Left colon (tissue), 2 donors: ENCODE measurements at regions of chr4 and their contacts with region 1.

Region 1: DNA sequence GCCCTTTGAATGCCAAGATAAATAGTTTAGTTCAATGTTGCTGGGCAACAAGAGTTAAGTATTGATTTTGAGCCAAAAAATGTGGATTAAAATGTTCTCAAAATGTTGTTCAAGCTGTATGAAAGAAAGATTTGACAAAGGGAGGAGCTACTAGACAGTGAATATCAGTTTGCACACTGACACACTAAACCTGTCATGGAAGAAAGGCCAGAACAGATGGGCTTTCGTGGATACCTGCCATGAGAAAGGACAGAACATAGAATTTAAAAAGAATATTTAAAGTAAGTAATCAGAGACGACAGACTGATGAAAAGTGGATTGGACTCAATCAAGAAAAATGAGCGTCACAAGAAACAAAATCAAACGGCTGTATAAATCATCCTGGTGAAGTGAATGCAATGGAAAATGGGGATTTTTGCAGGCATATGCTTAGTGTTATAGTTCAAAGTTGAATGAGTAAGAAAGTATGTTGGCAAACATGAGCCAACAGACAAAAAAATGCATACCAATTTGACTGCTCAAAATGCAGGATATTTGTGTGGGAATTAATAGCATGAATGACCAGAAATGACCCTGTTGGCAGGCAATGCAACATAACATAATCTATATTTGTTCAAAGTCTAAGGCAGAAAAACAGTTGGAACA is 7.4 kb downstream of the PCDH18 start:
- DNase-seq: no peak
- ATAC-seq: no peak

Region 2: DNA sequence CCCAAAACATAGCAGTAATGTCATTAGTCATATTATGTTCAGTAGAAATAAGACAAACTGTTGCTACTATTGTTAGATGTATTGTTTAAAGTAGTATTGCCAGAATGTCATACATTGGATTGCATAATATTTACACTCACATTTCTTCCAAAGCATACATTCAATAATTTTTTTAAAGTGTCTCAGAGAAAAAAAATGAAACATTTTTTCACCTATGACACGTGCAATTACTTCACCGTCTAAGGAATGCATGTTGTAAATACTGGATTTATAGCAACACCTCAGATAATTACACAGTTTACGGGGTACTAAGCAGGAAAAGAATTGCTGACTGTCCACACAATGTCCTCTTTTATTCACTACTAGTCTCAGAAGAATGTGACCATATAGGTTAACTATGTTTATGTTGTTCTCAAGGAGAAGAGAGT is 154.6 kb before region 1 on chr4:
- intact Hi-C with region 1: loop called in 1 of 2 experiments (anchors 10 kb)
- DNase-seq: no peak
- ATAC-seq: no peak

Region 3: GRCh38 chr4:137923494-137923893 is 398.6 kb after region 1 on chr4:
- intact Hi-C with region 1: no loop called
- DNase-seq: no peak
- ATAC-seq: no peak